Spleen (tissue), 13 donors: ENCODE measurements at regions of chr16 and their contacts with region 1.

Region 1: GRCh38 chr16:31868691-31869167 is 4.9 kb upstream of the ZNF267 start:
- DNase-seq: peak; percentile 85
- H3K4me3 ChIP-seq: peak overlapping the region in 3 of 8 donors; percentile 8 to 59 (median 15)
- H3K27ac ChIP-seq: peak overlapping the region; percentile 63 to 99 (median 88)
- H3K4me1 ChIP-seq: peaks cover 22 to 46% (median 40%) of the 10 kb centered on the region in 6 donors
- H3K27me3 ChIP-seq: no peaks in the 10 kb centered on the region
- CTCF ChIP-seq: peak; percentile 78 to 94 (median 90)
- POLR2A ChIP-seq: no peak

Region 2: DNA sequence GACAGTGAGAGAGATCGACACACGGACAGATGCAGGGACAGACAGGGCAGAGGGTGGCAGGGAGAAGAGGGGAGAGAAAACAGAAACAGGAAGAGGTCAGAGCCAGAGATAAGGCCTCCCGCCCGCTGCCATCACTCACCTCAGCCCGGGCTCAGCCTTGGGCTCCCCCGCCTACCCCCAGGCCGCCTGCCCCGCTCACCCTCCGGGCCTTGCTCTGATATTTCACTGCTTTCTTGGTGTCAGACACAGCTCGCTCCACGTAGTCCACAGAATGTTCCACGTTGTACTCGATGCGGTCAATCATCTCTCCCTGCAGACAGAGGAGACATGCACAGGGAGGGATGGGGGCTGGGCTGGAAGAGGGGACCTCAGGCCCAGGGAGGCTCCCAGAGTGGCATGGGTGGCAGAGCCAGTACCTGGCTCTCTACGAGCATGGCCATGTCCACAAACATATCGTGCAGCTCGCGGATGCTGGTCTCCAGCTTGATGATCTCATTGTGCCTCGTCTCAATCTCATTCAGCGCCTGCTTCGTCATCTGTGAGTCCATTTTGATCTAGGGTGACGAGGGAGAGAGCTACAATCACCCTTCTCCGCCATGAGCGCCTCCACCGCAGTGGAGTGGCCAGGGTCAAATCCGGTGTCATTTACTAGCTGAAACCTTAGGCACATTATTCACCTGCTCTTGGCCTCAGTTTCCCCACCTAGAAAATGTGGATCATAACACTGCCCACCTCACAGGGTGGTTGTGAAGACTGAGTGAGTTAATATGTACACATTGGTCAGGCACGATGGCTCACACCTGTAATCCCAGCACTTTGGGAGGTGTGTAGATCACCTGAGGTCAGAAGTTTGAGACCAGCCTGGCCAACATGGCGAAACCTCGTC is 875.6 kb before region 1 on chr16:
- intact Hi-C with region 1: loop called (anchors 5 kb)
- DNase-seq: no peak
- H3K4me3 ChIP-seq: no peak overlapping the region
- H3K27ac ChIP-seq: no peak overlapping the region
- H3K4me1 ChIP-seq: peaks cover 0 to 26% (median 16%) of the 10 kb centered on the region in 6 donors
- H3K27me3 ChIP-seq: peaks cover 0 to 10% (median 0%) of the 10 kb centered on the region in 7 donors
- CTCF ChIP-seq: no peak
- POLR2A ChIP-seq: no peak